ENCODE measurements at regions of chr14 and their contacts with region 1.

Region 1: DNA sequence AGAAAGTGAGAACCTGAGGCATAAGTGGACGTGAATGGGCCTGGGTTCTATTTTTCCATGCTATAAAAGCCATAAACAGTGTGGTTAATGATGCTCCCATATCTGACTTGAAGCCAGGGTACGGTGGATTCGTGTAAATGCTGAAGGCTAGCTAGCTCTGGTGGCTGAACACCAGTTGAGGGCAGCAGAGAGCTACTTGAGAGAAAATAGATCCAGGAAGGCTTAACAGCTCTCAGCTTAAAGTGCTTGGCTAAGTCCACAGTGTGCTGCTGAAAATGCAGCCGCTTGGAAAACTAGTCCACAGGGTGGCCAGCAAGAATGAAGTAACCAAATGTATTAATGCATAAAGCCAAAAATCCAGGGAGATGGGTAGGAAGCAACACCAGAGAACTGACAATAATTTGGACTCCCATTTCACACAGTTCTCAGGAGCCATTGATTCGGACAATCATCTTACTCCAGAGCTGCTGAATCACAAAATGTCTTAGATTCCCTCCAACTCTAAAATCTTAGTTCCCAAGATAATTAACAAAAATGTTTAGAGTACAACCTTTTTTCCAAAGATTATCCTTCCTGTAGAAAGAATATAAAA is 15.0 kb upstream of the FOXG1 start:
- DNase-seq: peak; percentile 49
- ATAC-seq: peak; percentile 85
- H3K4me3 ChIP-seq: no peak overlapping the region
- H3K27ac ChIP-seq: no peak overlapping the region
- H3K4me1 ChIP-seq: no peaks in the 10 kb centered on the region
- H3K27me3 ChIP-seq: peaks cover 21% of the 10 kb centered on the region
- CTCF ChIP-seq: peak; percentile 63
- POLR2A ChIP-seq: no peak
- RAD21 ChIP-seq: peak; percentile 61

Region 2: DNA sequence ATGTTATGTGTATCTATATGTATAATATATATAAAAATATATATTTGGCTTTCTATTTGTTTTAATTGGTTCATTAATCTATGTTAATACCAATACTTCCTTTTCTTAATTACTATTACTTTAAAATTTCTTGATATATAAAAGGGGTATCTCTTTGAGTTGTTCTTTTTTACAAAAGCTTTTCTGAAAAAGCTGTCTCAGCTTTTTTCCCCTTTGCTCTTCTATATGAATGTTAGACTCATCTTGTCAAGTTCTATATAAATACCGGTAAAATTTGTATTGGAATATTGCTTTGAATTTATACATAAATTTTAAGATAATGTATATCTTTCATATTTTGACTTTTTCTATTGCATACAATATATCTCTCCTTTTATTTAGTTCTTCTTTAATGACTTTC is 124.8 kb before region 1 on chr14:
- CTCF ChIA-PET with region 1: no interaction called
- POLR2A ChIA-PET with region 1: no interaction called
- dilution Hi-C with region 1: no loop called
- in situ Hi-C with region 1: no loop called
- intact Hi-C with region 1: no loop called
- DNase-seq: no peak
- ATAC-seq: no peak
- H3K4me3 ChIP-seq: no peak overlapping the region
- H3K27ac ChIP-seq: no peak overlapping the region
- H3K4me1 ChIP-seq: no peaks in the 10 kb centered on the region
- H3K27me3 ChIP-seq: no peaks in the 10 kb centered on the region
- CTCF ChIP-seq: no peak
- POLR2A ChIP-seq: no peak
- RAD21 ChIP-seq: no peak

Region 3: DNA sequence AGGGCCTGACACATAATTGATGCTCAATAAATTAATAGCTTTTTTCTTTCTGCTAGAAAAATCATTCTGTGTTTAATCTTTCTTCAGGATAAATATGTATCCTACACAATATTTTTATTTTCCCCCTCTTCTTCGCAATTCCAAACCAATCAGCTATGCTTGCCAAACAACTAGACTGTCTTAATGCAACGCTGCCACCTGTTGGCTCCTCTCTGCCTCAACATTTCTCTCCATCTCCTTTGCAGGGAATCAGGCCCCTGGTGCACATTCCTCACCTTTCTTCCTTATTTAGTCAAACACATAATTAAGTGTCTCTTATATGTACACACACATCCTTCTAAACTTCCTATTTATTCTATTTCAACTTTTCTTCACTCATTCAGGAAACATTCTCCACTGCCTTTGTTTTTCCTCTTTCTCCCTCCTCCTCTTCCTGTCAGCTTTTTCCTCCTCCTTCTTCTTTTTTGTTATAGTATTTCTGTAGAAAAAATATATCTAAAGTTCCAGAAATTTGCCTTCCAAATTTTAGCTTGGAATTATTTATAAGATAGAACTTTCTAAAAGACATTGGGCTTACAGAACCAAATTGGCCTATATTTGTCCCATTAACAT is 770.1 kb after region 1 on chr14:
- CTCF ChIA-PET with region 1: interaction called, 8 read pairs
- POLR2A ChIA-PET with region 1: no interaction called
- dilution Hi-C with region 1: no loop called
- in situ Hi-C with region 1: no loop called
- intact Hi-C with region 1: loop called (anchors 1 kb)
- DNase-seq: peak; percentile 6
- ATAC-seq: no peak
- H3K4me3 ChIP-seq: no peak overlapping the region
- H3K27ac ChIP-seq: no peak overlapping the region
- H3K4me1 ChIP-seq: no peaks in the 10 kb centered on the region
- H3K27me3 ChIP-seq: no peaks in the 10 kb centered on the region
- CTCF ChIP-seq: peak; percentile 32
- POLR2A ChIP-seq: no peak
- RAD21 ChIP-seq: peak; percentile 47

Region 4: DNA sequence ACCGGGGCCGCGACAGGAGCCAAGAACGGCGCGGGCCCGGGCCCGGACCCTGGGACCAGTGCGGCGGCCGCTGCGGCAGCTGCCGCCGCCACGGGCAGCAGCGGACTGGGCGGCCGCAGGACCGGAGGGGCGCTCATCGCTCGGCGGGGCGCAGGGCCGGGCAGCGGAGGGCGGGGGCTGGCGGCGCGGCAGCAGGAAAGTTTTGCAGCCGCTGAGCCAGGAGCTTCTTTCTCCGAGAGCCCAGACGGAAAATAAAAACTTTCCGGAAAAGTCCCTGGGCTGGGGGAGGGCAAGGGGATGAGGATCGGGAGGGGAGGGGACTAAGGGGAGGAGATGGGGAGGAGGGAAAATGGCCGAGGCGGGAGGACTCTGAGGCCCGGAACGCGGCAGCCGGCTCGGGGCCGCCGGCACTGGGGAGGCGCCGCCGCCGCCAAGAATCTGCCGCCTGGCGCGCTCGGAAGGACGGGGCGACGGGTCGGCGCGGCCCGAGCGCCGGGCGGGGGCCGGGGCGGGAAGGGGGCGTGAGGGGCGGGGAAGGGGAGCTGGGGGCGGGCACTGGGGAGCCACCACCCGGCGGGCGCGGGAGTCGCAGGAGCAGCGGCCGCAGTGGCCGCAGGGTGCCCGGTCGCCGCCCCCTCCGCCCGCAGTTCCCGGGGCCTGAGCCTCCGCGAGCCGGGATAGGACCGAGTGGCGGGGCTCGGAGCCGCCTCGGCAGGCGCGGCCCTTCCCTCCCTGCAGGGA is 1176.0 kb after region 1 on chr14 and contains the start of gene PRKD1:
- CTCF ChIA-PET with region 1: no interaction called
- POLR2A ChIA-PET with region 1: no interaction called
- dilution Hi-C with region 1: no loop called
- in situ Hi-C with region 1: no loop called
- intact Hi-C with region 1: loop called (anchors 10 kb)
- DNase-seq: peak; percentile 62
- ATAC-seq: peak; percentile 77
- H3K4me3 ChIP-seq: peak within 1 kb of the TSS; percentile 75
- H3K27ac ChIP-seq: peak within 1 kb of the TSS; percentile 63
- H3K4me1 ChIP-seq: peaks cover 5% of the 10 kb centered on the region
- H3K27me3 ChIP-seq: no peaks in the 10 kb centered on the region
- CTCF ChIP-seq: 0 out of 2 replicates have a peak, but pooled peaks have one; percentile 7
- POLR2A ChIP-seq: no peak
- RAD21 ChIP-seq: no peak
- total RNA-seq, gene PRKD1: 12.8 and 12.9 TPM in 2 replicates

Region 5: GRCh38 chr14:30214461-30215090 is 1463.0 kb after region 1 on chr14:
- CTCF ChIA-PET with region 1: no interaction called
- POLR2A ChIA-PET with region 1: no interaction called
- dilution Hi-C with region 1: no loop called
- in situ Hi-C with region 1: loop called (anchors 10 kb)
- intact Hi-C with region 1: no loop called
- DNase-seq: peak; percentile 85
- ATAC-seq: peak; percentile 77
- H3K4me3 ChIP-seq: no peak overlapping the region
- H3K27ac ChIP-seq: no peak overlapping the region
- H3K4me1 ChIP-seq: peaks cover 13% of the 10 kb centered on the region
- H3K27me3 ChIP-seq: no peaks in the 10 kb centered on the region
- CTCF ChIP-seq: peak; percentile 88
- POLR2A ChIP-seq: peak; percentile 35; the same call in 1 of the 2 replicates
- RAD21 ChIP-seq: peak; percentile 93

Region 6: GRCh38 chr14:30443368-30444007 is 1691.9 kb after region 1 on chr14:
- CTCF ChIA-PET with region 1: interaction called, 4 read pairs
- POLR2A ChIA-PET with region 1: no interaction called
- dilution Hi-C with region 1: no loop called
- in situ Hi-C with region 1: no loop called
- intact Hi-C with region 1: loop called (anchors 1 kb)
- DNase-seq: peak; percentile 46
- ATAC-seq: peak; percentile 68
- H3K4me3 ChIP-seq: no peak overlapping the region
- H3K27ac ChIP-seq: no peak overlapping the region
- H3K4me1 ChIP-seq: no peaks in the 10 kb centered on the region
- H3K27me3 ChIP-seq: peaks cover 6% of the 10 kb centered on the region
- CTCF ChIP-seq: peak; percentile 56
- POLR2A ChIP-seq: no peak
- RAD21 ChIP-seq: peak; percentile 71